ENCODE measurements at regions of chr7 and their contacts with region 1.

Region 1: GRCh38 chr7:38274486-38274885 is 1.1 kb upstream of the TARP start:
- DNase-seq: no peak
- H3K4me3 Mint-ChIP-seq: no peak overlapping the region
- H3K27ac Mint-ChIP-seq: no peak overlapping the region
- H3K4me1 Mint-ChIP-seq: no peaks in the 10 kb centered on the region
- H3K27me3 Mint-ChIP-seq: no peaks in the 10 kb centered on the region

Region 2: GRCh38 chr7:38300175-38300574 is 25.7 kb after region 1 on chr7:
- intact Hi-C with region 1: loop called (anchors 2 kb)
- DNase-seq: no peak
- H3K4me3 Mint-ChIP-seq: peak overlapping the region; percentile 73
- H3K27ac Mint-ChIP-seq: peak overlapping the region; percentile 38
- H3K4me1 Mint-ChIP-seq: peaks cover 8% of the 10 kb centered on the region
- H3K27me3 Mint-ChIP-seq: no peaks in the 10 kb centered on the region

Region 3: GRCh38 chr7:38351601-38352000 is 77.1 kb after region 1 on chr7:
- intact Hi-C with region 1: no loop called
- DNase-seq: no peak
- H3K4me3 Mint-ChIP-seq: no peak overlapping the region
- H3K27ac Mint-ChIP-seq: no peak overlapping the region
- H3K4me1 Mint-ChIP-seq: peaks cover 22% of the 10 kb centered on the region
- H3K27me3 Mint-ChIP-seq: no peaks in the 10 kb centered on the region

Region 4: GRCh38 chr7:38398725-38399321 is 124.3 kb after region 1 on chr7:
- intact Hi-C with region 1: no loop called
- DNase-seq: peak; percentile 20
- H3K4me3 Mint-ChIP-seq: no peak overlapping the region
- H3K27ac Mint-ChIP-seq: no peak overlapping the region
- H3K4me1 Mint-ChIP-seq: peaks cover 15% of the 10 kb centered on the region
- H3K27me3 Mint-ChIP-seq: peaks cover 12% of the 10 kb centered on the region